Activated B cell treated with CpG ODN at 0.5 μM for 24 hours (primary cell): ENCODE measurements at regions of chr2 and their contacts with region 1.

Region 1: DNA sequence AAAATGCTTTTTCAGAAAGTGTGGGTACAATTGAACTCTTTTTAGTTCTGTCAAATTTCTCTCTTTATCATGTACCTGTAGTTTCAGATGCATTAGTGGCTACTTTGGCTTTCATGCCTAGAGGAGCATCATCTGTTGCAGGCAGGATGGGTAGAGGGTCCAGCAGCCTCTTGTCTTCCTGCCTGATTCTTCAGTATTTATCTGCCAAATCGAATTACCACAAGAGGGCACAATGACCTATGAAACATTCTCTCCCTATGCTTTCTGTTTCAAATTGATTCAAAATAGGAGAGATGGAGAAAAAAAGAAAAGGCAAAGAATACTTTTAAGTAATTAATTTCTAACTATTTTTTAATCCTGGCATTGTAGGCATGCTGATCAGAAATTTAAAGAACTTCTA is 477.2 kb downstream of the TRIB2 start:
- DNase-seq: no peak
- ATAC-seq: no peak
- H3K4me3 Mint-ChIP-seq: no peak overlapping the region
- H3K27ac Mint-ChIP-seq: no peak overlapping the region
- H3K4me1 Mint-ChIP-seq: peaks cover 3% of the 10 kb centered on the region
- H3K27me3 Mint-ChIP-seq: no peaks in the 10 kb centered on the region
- CTCF ChIP-seq: no peak

Region 2: GRCh38 chr2:13218205-13218604 is 24.3 kb after region 1 on chr2:
- CTCF ChIA-PET with region 1: no interaction called
- POLR2A ChIA-PET with region 1: no interaction called
- intact Hi-C with region 1: no loop called
- DNase-seq: no peak
- ATAC-seq: no peak
- H3K4me3 Mint-ChIP-seq: no peak overlapping the region
- H3K27ac Mint-ChIP-seq: no peak overlapping the region
- H3K4me1 Mint-ChIP-seq: no peaks in the 10 kb centered on the region
- H3K27me3 Mint-ChIP-seq: no peaks in the 10 kb centered on the region
- CTCF ChIP-seq: no peak

Region 3: DNA sequence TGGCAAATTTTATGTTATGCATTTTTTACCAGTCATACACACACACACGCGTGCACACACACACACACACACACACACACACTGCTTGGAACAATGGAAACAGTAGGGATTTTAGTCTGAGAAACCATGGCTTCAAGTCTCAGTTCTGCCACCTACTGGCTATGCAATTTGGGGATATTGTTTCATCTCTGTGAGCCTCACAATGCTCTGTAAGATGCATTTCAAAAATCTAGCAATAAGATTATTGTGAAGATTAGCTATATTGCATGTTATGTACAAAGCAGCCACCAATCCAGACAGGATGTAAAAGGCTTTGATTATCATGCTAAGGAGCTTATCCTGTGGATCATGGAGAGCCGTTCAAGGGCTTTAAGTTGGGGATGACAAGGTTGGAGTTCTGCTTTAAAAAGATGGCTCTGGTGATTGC is 1965.9 kb after region 1 on chr2:
- CTCF ChIA-PET with region 1: no interaction called
- POLR2A ChIA-PET with region 1: no interaction called
- intact Hi-C with region 1: loop called (anchors 5 kb)
- DNase-seq: no peak
- ATAC-seq: no peak
- H3K4me3 Mint-ChIP-seq: no peak overlapping the region
- H3K27ac Mint-ChIP-seq: no peak overlapping the region
- H3K4me1 Mint-ChIP-seq: no peaks in the 10 kb centered on the region
- H3K27me3 Mint-ChIP-seq: no peaks in the 10 kb centered on the region
- CTCF ChIP-seq: no peak